Panc1 (cell line): ENCODE measurements at regions of chr6 and their contacts with region 1.

Region 1: GRCh38 chr6:52577022-52577777 is at the start of gene TRAM2:
- DNase-seq: no peak
- ATAC-seq: peak; percentile 87
- H3K4me3 ChIP-seq: peak within 1 kb of the TSS; percentile 69 to 80
- H3K27ac ChIP-seq: peak within 1 kb of the TSS; percentile 98
- H3K4me1 ChIP-seq: peaks cover 32% of the 10 kb centered on the region
- H3K27me3 ChIP-seq: no peaks in the 10 kb centered on the region
- CTCF ChIP-seq: no peak
- total RNA-seq, gene TRAM2: 56.7 TPM

Region 2: GRCh38 chr6:52130440-52130839 is 446.8 kb before region 1 on chr6:
- CTCF ChIA-PET with region 1: no interaction called
- POLR2A ChIA-PET with region 1: no interaction called
- in situ Hi-C with region 1: no loop called
- intact Hi-C with region 1: no loop called
- DNase-seq: no peak
- ATAC-seq: no peak
- H3K4me3 ChIP-seq: no peak overlapping the region
- H3K27ac ChIP-seq: no peak overlapping the region
- H3K4me1 ChIP-seq: no peaks in the 10 kb centered on the region
- H3K27me3 ChIP-seq: peaks cover 8% of the 10 kb centered on the region
- CTCF ChIP-seq: no peak

Region 3: DNA sequence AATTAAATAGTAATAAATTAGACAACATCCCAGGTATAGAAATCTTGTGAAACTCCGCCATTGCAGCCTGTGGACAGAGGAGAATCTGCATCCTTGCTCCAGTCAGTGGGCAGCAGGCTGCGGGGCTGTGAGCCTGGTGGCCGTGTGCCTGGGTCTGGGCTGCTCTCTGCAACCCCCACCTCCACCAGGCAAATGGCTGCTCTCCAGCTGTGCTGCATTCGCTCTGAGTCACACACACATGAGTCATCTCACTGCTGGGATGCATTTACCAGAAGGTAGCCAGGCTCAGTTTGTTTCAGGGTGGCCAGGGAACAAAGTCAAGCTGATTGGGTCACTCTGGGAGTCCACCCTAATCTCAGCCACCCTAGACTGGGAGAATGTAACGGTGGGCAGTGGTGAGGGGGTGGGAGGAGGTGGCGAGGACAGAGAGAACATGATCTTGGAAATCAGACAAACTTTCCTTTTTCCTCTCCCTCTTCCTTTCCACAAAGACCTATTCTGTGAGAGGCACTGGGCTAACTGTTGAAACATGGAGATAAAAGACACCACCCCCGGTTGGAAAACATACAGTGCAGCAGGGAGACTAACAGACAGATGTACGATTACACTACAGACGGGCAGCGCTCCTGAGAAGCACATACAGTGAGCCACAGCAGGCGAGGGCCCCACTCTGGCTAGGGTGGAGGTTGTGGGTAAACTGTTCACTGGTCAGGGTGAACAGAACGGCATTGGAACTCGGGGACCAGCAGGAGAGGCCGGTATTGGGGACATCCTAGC is 59.5 kb before region 1 on chr6:
- CTCF ChIA-PET with region 1: no interaction called
- POLR2A ChIA-PET with region 1: no interaction called
- in situ Hi-C with region 1: no loop called
- intact Hi-C with region 1: loop called (anchors 5 kb)
- DNase-seq: peak; percentile 75
- ATAC-seq: peak; percentile 93
- H3K4me3 ChIP-seq: peak overlapping the region in 1 of 2 experiments; percentile 30; a peak in 2 of 4 replicates
- H3K27ac ChIP-seq: peak overlapping the region; percentile 98
- H3K4me1 ChIP-seq: peaks cover 59% of the 10 kb centered on the region
- H3K27me3 ChIP-seq: no peaks in the 10 kb centered on the region
- CTCF ChIP-seq: no peak

Region 4: GRCh38 chr6:52588087-52588709 is 11.0 kb after region 1 on chr6:
- CTCF ChIA-PET with region 1: no interaction called
- POLR2A ChIA-PET with region 1: no interaction called
- in situ Hi-C with region 1: no loop called
- intact Hi-C with region 1: no loop called
- DNase-seq: no peak
- ATAC-seq: no peak
- H3K4me3 ChIP-seq: no peak overlapping the region
- H3K27ac ChIP-seq: no peak overlapping the region
- H3K4me1 ChIP-seq: peaks cover 5% of the 10 kb centered on the region
- H3K27me3 ChIP-seq: no peaks in the 10 kb centered on the region
- CTCF ChIP-seq: no peak

Region 5: GRCh38 chr6:52664186-52664990 is 87.2 kb after region 1 on chr6:
- CTCF ChIA-PET with region 1: no interaction called
- POLR2A ChIA-PET with region 1: no interaction called
- in situ Hi-C with region 1: no loop called
- intact Hi-C with region 1: loop called (anchors 1 kb)
- DNase-seq: peak; percentile 80
- ATAC-seq: peak; percentile 97
- H3K4me3 ChIP-seq: peak overlapping the region; percentile 82 to 84
- H3K27ac ChIP-seq: peak overlapping the region; percentile 92
- H3K4me1 ChIP-seq: peaks cover 17% of the 10 kb centered on the region
- H3K27me3 ChIP-seq: no peaks in the 10 kb centered on the region
- CTCF ChIP-seq: no peak

Region 6: GRCh38 chr6:52741872-52742271 is 164.7 kb after region 1 on chr6:
- CTCF ChIA-PET with region 1: no interaction called
- POLR2A ChIA-PET with region 1: no interaction called
- in situ Hi-C with region 1: no loop called
- intact Hi-C with region 1: no loop called
- DNase-seq: no peak
- ATAC-seq: no peak
- H3K4me3 ChIP-seq: no peak overlapping the region
- H3K27ac ChIP-seq: no peak overlapping the region
- H3K4me1 ChIP-seq: no peaks in the 10 kb centered on the region
- H3K27me3 ChIP-seq: no peaks in the 10 kb centered on the region; the same call in 1 of the 2 replicates
- CTCF ChIP-seq: no peak

Region 7: GRCh38 chr6:53018446-53018845 is 441.2 kb after region 1 on chr6:
- CTCF ChIA-PET with region 1: no interaction called
- POLR2A ChIA-PET with region 1: interaction called, 22 read pairs
- in situ Hi-C with region 1: no loop called
- intact Hi-C with region 1: no loop called
- DNase-seq: no peak
- ATAC-seq: no peak
- H3K4me3 ChIP-seq: no peak overlapping the region
- H3K27ac ChIP-seq: no peak overlapping the region
- H3K4me1 ChIP-seq: no peaks in the 10 kb centered on the region
- H3K27me3 ChIP-seq: no peaks in the 10 kb centered on the region
- CTCF ChIP-seq: no peak

Region 8: DNA sequence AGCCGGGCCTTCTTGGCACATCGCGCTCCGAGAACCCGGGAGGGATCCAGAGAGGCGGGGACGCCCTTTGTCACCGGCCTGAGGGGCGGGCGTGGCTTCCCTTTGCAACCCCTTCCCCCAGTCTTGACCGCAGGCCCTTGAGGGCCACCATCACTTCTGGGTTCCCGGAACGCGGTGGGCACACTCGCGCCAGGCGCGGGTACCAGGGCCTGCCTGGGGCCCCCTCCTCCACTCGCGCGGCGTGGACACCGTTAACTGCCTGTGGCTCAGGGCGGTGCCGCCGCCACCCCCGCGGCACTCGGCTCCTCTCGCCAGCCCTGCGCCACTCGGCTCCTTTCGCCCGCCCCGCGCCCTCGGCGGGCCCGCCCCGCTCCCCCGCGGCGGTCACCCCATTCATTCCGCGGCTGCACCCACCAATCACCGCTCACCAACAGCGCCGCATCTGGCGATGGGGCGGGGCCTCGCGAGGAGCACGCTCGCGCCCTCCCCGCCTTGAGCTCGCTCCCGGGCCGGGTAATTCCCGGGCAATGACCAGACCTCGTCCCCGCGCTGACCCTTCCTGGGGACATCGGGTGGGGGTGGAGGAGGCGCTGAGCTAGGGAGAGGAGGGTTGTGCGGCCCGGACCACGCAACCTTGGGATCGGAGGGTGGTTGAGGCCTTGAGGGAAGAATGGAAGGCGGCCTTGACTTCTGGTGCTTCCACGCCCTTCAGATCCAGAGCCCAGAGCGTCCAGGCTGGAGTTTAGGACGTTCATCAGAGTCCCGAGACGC is 782.1 kb after region 1 on chr6:
- CTCF ChIA-PET with region 1: no interaction called
- POLR2A ChIA-PET with region 1: no interaction called
- in situ Hi-C with region 1: no loop called
- intact Hi-C with region 1: no loop called
- DNase-seq: peak; percentile 61
- ATAC-seq: peak; percentile 96
- H3K4me3 ChIP-seq: peak overlapping the region; percentile 51 to 62
- H3K27ac ChIP-seq: peak overlapping the region; percentile 100
- H3K4me1 ChIP-seq: peaks cover 44% of the 10 kb centered on the region
- H3K27me3 ChIP-seq: no peaks in the 10 kb centered on the region
- CTCF ChIP-seq: no peak